ENCODE measurements at regions of chr5 and their contacts with region 1.

Region 1: DNA sequence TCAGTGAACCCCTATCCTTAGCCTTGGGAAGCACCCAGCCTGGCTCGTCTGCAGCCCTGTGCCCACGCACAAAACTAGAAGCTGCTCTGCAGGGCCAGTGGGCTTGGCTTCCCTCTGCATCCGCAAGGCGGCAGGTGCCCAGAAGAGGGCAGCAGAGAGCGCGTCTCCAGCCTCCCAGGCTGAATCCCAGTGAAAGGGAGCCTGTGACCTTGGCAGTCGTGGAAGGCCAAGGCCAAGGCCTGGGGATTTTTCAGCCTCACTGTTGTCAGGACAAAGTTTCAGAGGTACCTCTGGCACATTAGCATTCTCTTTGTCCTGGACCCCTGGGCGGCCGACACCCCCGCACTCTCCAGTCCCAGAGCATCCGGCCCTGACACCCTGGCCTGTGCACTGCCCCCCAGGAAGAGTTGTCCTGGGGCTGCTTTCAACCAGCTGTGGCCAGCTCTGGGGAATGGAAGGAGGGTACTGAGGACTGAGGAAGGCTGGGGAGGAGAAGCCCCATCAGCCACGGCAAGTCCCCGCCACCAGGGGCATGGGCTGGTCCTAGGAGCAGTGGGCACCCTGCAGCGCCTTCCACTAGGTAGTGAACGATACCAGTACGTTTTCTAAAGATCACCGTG is 63.6 kb upstream of the IL17B start:
- DNase-seq: peak; percentile 80
- ATAC-seq: peak; percentile 94
- H3K4me3 Mint-ChIP-seq: no peak overlapping the region
- H3K27ac Mint-ChIP-seq: no peak overlapping the region
- H3K4me1 Mint-ChIP-seq: peaks cover 13% of the 10 kb centered on the region
- H3K27me3 Mint-ChIP-seq: no peaks in the 10 kb centered on the region
- CTCF ChIP-seq: peak; percentile 91

Region 2: DNA sequence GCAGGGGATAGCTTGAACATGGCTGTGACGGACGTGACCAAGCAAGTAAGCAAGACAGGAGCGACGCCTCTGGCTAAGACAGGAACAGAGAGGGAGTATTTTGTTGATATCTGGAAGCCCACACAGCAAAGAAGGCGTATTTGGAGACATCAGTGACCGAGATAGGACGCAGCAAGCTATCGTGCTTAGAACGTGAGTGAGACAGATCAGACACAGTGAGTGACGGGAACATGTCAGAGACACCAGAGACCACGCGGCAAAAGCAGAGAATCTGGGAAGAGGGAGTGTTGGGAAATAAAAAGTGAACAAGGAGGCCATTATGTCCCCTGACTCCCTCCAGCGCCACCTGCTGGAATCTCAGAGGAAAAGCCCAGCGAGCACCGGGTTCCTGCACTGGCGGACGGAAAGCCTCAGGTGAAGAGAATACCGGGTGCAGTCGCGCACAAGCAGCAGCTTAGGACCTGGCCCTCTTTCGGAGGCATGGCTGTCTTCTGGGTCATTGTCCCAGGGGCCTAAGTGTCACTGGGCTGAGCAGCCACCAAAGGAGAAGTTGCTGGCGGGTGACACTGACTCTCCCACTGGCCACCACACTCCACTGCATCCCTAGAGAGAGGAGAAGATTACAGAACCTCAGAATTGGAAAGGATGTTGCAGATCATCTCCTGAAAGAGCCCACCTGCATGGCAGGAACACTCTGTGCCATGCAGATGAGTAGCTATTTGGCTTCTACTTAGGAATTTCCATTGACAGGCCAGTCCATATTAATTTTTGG is 959.8 kb before region 1 on chr5:
- CTCF ChIA-PET with region 1: no interaction called
- POLR2A ChIA-PET with region 1: no interaction called
- intact Hi-C with region 1: no loop called
- DNase-seq: peak; percentile 71
- ATAC-seq: peak; percentile 92
- H3K4me3 Mint-ChIP-seq: peak overlapping the region; percentile 32
- H3K27ac Mint-ChIP-seq: no peak overlapping the region
- H3K4me1 Mint-ChIP-seq: no peaks in the 10 kb centered on the region
- H3K27me3 Mint-ChIP-seq: peaks cover 24% of the 10 kb centered on the region
- CTCF ChIP-seq: peak; percentile 77

Region 3: GRCh38 chr5:149254506-149254905 is 188.2 kb before region 1 on chr5:
- CTCF ChIA-PET with region 1: no interaction called
- POLR2A ChIA-PET with region 1: no interaction called
- intact Hi-C with region 1: no loop called
- DNase-seq: no peak
- ATAC-seq: no peak
- H3K4me3 Mint-ChIP-seq: no peak overlapping the region
- H3K27ac Mint-ChIP-seq: no peak overlapping the region
- H3K4me1 Mint-ChIP-seq: no peaks in the 10 kb centered on the region
- H3K27me3 Mint-ChIP-seq: no peaks in the 10 kb centered on the region
- CTCF ChIP-seq: no peak

Region 4: DNA sequence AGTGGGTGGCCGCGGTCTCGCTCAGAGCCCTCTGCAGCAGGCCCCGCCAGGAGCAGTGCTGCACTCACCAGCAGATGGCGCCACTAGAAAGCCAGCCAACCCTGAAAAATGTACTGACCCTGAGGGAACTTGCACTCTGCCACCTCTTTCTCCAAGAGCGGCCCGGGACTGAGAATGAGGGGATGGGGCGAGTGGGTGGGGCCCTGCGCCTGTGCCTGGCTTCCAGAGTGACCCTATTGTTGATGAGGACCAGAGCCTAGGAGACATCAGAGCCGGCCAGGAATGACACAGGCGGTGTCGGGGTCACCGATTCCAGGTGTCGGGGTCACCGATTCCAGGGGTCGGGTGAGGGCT is 60.7 kb before region 1 on chr5:
- CTCF ChIA-PET with region 1: interaction called, 11 read pairs
- POLR2A ChIA-PET with region 1: no interaction called
- intact Hi-C with region 1: no loop called
- DNase-seq: peak; percentile 80
- ATAC-seq: peak; percentile 93
- H3K4me3 Mint-ChIP-seq: no peak overlapping the region
- H3K27ac Mint-ChIP-seq: no peak overlapping the region
- H3K4me1 Mint-ChIP-seq: peaks cover 4% of the 10 kb centered on the region
- H3K27me3 Mint-ChIP-seq: no peaks in the 10 kb centered on the region
- CTCF ChIP-seq: peak; percentile 80

Region 5: GRCh38 chr5:149422366-149423048 is 20.2 kb before region 1 on chr5:
- CTCF ChIA-PET with region 1: interaction called, 17 read pairs
- POLR2A ChIA-PET with region 1: interaction called, 3 read pairs
- intact Hi-C with region 1: no loop called
- DNase-seq: no peak
- ATAC-seq: peak; percentile 53
- H3K4me3 Mint-ChIP-seq: no peak overlapping the region
- H3K27ac Mint-ChIP-seq: no peak overlapping the region
- H3K4me1 Mint-ChIP-seq: no peaks in the 10 kb centered on the region
- H3K27me3 Mint-ChIP-seq: no peaks in the 10 kb centered on the region
- CTCF ChIP-seq: no peak

Region 6: GRCh38 chr5:149481485-149481884 is 38.8 kb after region 1 on chr5:
- CTCF ChIA-PET with region 1: interaction called, 10 read pairs
- POLR2A ChIA-PET with region 1: interaction called, 4 read pairs
- intact Hi-C with region 1: no loop called
- DNase-seq: no peak
- ATAC-seq: no peak
- H3K4me3 Mint-ChIP-seq: no peak overlapping the region
- H3K27ac Mint-ChIP-seq: no peak overlapping the region
- H3K4me1 Mint-ChIP-seq: no peaks in the 10 kb centered on the region
- H3K27me3 Mint-ChIP-seq: no peaks in the 10 kb centered on the region
- CTCF ChIP-seq: no peak

Region 7: DNA sequence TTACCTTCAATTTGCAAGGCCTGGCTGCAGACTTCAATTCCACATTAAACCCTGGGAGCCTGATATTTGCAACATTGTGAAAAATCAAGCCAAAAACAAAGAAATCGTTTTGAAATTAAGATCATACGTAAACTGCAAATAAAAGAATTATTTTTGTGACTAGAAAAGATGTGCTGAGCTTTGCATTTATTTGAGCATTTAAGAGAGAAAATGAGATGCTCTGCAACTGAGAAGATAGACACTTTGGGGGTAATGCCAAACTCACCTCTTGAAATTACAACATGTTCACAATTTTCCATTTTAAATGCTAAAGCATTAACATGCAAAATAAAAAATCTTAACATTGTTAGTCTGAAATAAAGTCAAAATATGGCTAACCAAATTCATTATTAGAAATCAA is 62.0 kb after region 1 on chr5:
- CTCF ChIA-PET with region 1: no interaction called
- POLR2A ChIA-PET with region 1: no interaction called
- intact Hi-C with region 1: no loop called
- DNase-seq: no peak
- ATAC-seq: no peak
- H3K4me3 Mint-ChIP-seq: no peak overlapping the region
- H3K27ac Mint-ChIP-seq: no peak overlapping the region
- H3K4me1 Mint-ChIP-seq: no peaks in the 10 kb centered on the region
- H3K27me3 Mint-ChIP-seq: no peaks in the 10 kb centered on the region
- CTCF ChIP-seq: no peak

Region 8: GRCh38 chr5:149551200-149552037 is 108.7 kb after region 1 on chr5 and contains the start of gene CSNK1A1:
- CTCF ChIA-PET with region 1: interaction called, 12 read pairs
- POLR2A ChIA-PET with region 1: no interaction called
- intact Hi-C with region 1: no loop called
- DNase-seq: peak; percentile 99
- ATAC-seq: peak; percentile 90
- H3K4me3 Mint-ChIP-seq: peak within 1 kb of the TSS; percentile 96
- H3K27ac Mint-ChIP-seq: peak within 1 kb of the TSS; percentile 99
- H3K4me1 Mint-ChIP-seq: peaks cover 23% of the 10 kb centered on the region
- H3K27me3 Mint-ChIP-seq: no peaks in the 10 kb centered on the region
- CTCF ChIP-seq: peak; percentile 70
- total RNA-seq, gene CSNK1A1: 154 to 168 TPM

Region 9: DNA sequence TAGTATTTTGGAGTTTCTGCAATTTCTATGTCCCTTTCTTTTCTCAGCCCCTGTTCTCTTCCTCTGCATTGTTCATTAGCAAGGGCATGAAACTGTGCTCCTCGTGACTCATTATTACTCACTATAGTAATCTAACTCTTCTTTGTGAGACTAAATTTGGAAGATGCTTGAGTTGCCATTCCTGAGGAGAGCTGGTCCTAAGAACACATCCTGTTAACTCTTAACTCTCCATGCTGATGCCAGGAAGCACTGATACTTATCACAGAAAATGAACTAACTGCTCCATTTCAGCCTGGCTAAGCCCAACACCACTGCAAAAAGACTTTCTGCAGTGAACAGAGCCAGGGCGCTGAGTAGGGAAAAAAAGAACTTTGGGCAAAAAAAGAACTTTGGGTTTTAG is 119.2 kb after region 1 on chr5:
- CTCF ChIA-PET with region 1: interaction called, 71 read pairs
- POLR2A ChIA-PET with region 1: no interaction called
- intact Hi-C with region 1: loop called (anchors 1 kb)
- DNase-seq: no peak
- ATAC-seq: peak; percentile 81
- H3K4me3 Mint-ChIP-seq: no peak overlapping the region
- H3K27ac Mint-ChIP-seq: peak overlapping the region; percentile 40
- H3K4me1 Mint-ChIP-seq: peaks cover 24% of the 10 kb centered on the region
- H3K27me3 Mint-ChIP-seq: no peaks in the 10 kb centered on the region
- CTCF ChIP-seq: no peak

Region 10: GRCh38 chr5:149567226-149567625 is 124.6 kb after region 1 on chr5:
- CTCF ChIA-PET with region 1: interaction called, 71 read pairs
- POLR2A ChIA-PET with region 1: no interaction called
- intact Hi-C with region 1: loop called (anchors 1 kb)
- DNase-seq: no peak
- ATAC-seq: no peak
- H3K4me3 Mint-ChIP-seq: no peak overlapping the region
- H3K27ac Mint-ChIP-seq: no peak overlapping the region
- H3K4me1 Mint-ChIP-seq: peaks cover 13% of the 10 kb centered on the region
- H3K27me3 Mint-ChIP-seq: no peaks in the 10 kb centered on the region
- CTCF ChIP-seq: no peak

Measured in activated CD8-positive, alpha-beta T cell treated with anti-CD3 and anti-CD28 coated beads for 36 hours (primary cell).